Activated T-helper 1 cell treated with anti-CD3 and anti-CD28 coated beads, Interleukin-12 subunit alpha, Interleukin-12 subunit beta, Interleukin-2, Interleukin-4 antibody, amounts not matched to agents 30 ng/mL and 10 ng/mL and 1 ng/mL, durations not matched to agents 14 hours and 24 hours and 36 hours (primary cell): ENCODE measurements at regions of chr1 and their contacts with region 1.

Region 1: GRCh38 chr1:231091831-231092301 is 51.8 kb upstream of the FAM89A start:
- DNase-seq: no peak
- H3K4me3 Mint-ChIP-seq: no peak overlapping the region
- H3K27ac Mint-ChIP-seq: no peak overlapping the region
- H3K4me1 Mint-ChIP-seq: no peaks in the 10 kb centered on the region
- H3K27me3 Mint-ChIP-seq: peaks cover 18% of the 10 kb centered on the region

Region 2: DNA sequence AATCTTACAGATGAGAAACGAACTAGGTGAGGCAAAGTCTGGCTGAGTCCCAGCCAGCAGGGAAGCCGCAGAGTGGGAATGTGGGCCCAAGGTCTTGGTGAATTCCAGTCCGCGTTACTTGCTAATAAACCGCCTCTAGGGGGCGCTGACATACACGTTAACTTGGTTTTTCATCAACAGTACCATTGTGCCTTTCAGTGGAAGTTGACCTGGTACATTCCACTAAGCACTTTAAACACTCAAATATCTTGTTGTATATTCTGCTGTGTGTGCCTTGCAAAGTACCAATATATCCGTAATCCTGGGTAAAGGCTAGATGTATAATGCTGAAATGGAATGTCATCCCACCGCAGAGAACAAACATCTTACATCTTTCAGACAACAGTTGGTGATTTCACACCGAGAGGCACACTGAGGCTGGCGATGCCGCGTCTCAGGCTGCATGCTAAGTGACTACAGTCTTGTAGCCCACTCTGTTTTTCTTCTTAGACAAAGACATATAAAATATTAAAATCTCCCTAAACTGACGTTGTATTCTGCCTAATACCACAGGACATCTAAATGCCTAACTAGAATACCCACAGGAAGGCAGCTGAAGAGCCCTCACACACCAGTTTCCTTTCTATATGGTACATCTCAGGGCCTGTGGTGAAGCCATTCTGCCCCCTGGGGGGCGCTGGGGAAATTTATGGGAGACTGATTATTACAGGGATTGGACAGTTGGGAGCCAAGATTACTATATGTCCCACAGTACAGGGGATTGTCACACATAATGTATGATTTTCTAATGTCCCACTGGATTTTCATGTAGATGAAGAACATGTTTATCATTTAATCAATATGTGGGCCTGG is 174.4 kb before region 1 on chr1:
- intact Hi-C with region 1: loop called (anchors 1 kb)
- DNase-seq: peak; percentile 44
- H3K4me3 Mint-ChIP-seq: no peak overlapping the region
- H3K27ac Mint-ChIP-seq: no peak overlapping the region
- H3K4me1 Mint-ChIP-seq: no peaks in the 10 kb centered on the region
- H3K27me3 Mint-ChIP-seq: no peaks in the 10 kb centered on the region